ENCODE measurements at regions of chr12 and their contacts with region 1.

Region 1: GRCh38 chr12:106282457-106283097 is 20.0 kb upstream of the TCP11L2 start:
- DNase-seq: peak; percentile 67 to 72 (median 71)
- ATAC-seq: peak; percentile 94
- H3K4me3 ChIP-seq: no peak overlapping the region
- H3K27ac ChIP-seq: no peak overlapping the region
- H3K4me1 ChIP-seq: 0 out of 5 replicates have a peak, but pooled peaks cover 0 to 3% of the 10 kb centered on the region in 2 experiments
- H3K27me3 ChIP-seq: peaks cover 0 to 18% of the 10 kb centered on the region in 2 experiments
- CTCF ChIP-seq: peak; percentile 77 to 82 (median 78)
- EP300 ChIP-seq: no peak
- POLR2A ChIP-seq: no peak
- RAD21 ChIP-seq: peak; percentile 71 to 79

Region 2: DNA sequence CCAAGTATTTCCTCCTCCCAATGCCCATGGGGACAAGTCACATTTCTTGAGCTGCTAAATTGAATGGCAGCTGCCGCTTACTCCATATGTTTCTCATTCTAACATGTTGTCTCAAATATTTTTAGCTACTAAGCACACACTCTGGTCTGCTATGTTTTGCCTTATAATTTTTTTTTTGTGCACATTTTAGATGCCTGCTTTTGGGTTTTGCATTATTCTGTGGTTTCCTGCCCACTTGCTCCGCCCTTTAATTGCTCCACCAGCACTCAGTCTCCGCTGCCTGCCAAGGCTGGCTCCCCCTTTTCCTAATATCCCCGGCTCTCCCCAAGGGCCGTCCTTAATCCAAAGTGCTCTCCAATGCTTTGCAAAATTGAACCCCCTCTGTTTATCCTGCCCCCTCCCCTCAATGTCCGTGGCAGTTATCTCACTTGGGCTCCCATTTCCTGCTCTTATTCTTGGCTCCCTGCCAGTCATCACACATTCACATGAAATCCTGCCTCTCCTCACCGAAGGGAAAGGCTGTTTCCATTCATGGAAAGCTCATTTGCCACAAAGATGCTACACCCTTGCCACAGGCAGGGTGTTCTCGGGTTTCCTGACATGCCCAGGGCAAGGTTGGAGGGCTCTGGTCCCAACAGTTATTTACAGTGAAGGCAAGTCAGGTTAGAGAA is 872.6 kb before region 1 on chr12:
- CTCF ChIA-PET with region 1: no interaction called
- POLR2A ChIA-PET with region 1: no interaction called
- in situ Hi-C with region 1: no loop called
- intact Hi-C with region 1: loop called (anchors 10 kb)
- DNase-seq: no peak
- ATAC-seq: no peak
- H3K4me3 ChIP-seq: no peak overlapping the region
- H3K27ac ChIP-seq: no peak overlapping the region
- H3K4me1 ChIP-seq: no peaks in the 10 kb centered on the region
- H3K27me3 ChIP-seq: peaks cover 2 to 7% of the 10 kb centered on the region in 2 experiments; a peak in 1 of 5 replicates
- CTCF ChIP-seq: no peak
- EP300 ChIP-seq: no peak
- POLR2A ChIP-seq: no peak
- RAD21 ChIP-seq: no peak

Region 3: GRCh38 chr12:106157802-106158201 is 124.8 kb before region 1 on chr12:
- CTCF ChIA-PET with region 1: no interaction called
- POLR2A ChIA-PET with region 1: no interaction called
- in situ Hi-C with region 1: no loop called
- intact Hi-C with region 1: no loop called
- DNase-seq: no peak
- ATAC-seq: no peak
- H3K4me3 ChIP-seq: no peak overlapping the region
- H3K27ac ChIP-seq: no peak overlapping the region
- H3K4me1 ChIP-seq: no peaks in the 10 kb centered on the region
- H3K27me3 ChIP-seq: no peaks in the 10 kb centered on the region; a peak in 2 of 5 replicates
- CTCF ChIP-seq: no peak
- EP300 ChIP-seq: no peak
- POLR2A ChIP-seq: no peak
- RAD21 ChIP-seq: no peak

Region 4: GRCh38 chr12:106211973-106212372 is 70.6 kb before region 1 on chr12:
- CTCF ChIA-PET with region 1: no interaction called
- POLR2A ChIA-PET with region 1: no interaction called
- in situ Hi-C with region 1: no loop called
- intact Hi-C with region 1: no loop called
- DNase-seq: no peak
- ATAC-seq: no peak
- H3K4me3 ChIP-seq: no peak overlapping the region
- H3K27ac ChIP-seq: no peak overlapping the region
- H3K4me1 ChIP-seq: no peaks in the 10 kb centered on the region
- H3K27me3 ChIP-seq: peaks cover 0 to 13% of the 10 kb centered on the region in 2 experiments; a peak in 2 of 5 replicates
- CTCF ChIP-seq: no peak
- EP300 ChIP-seq: no peak
- POLR2A ChIP-seq: no peak
- RAD21 ChIP-seq: no peak

Region 5: GRCh38 chr12:106345739-106346138 is 63.2 kb after region 1 on chr12:
- CTCF ChIA-PET with region 1: no interaction called
- POLR2A ChIA-PET with region 1: interaction called, 3 read pairs
- in situ Hi-C with region 1: no loop called
- intact Hi-C with region 1: loop called (anchors 5 kb)
- DNase-seq: peak in 3 of 4 experiments; percentile 13 to 60 (median 27)
- ATAC-seq: peak; percentile 98
- H3K4me3 ChIP-seq: no peak overlapping the region
- H3K27ac ChIP-seq: no peak overlapping the region
- H3K4me1 ChIP-seq: no peaks in the 10 kb centered on the region
- H3K27me3 ChIP-seq: peaks cover 6 to 7% of the 10 kb centered on the region in 2 experiments; a peak in 4 of 5 replicates
- CTCF ChIP-seq: peak; percentile 58 to 70 (median 67)
- EP300 ChIP-seq: no peak
- POLR2A ChIP-seq: no peak
- RAD21 ChIP-seq: peak in 1 of 2 experiments; percentile 69; a peak in 3 of 4 replicates

Measured in K562 (cell line).